ENCODE measurements at regions of chr12 and their contacts with region 1.

Region 1: DNA sequence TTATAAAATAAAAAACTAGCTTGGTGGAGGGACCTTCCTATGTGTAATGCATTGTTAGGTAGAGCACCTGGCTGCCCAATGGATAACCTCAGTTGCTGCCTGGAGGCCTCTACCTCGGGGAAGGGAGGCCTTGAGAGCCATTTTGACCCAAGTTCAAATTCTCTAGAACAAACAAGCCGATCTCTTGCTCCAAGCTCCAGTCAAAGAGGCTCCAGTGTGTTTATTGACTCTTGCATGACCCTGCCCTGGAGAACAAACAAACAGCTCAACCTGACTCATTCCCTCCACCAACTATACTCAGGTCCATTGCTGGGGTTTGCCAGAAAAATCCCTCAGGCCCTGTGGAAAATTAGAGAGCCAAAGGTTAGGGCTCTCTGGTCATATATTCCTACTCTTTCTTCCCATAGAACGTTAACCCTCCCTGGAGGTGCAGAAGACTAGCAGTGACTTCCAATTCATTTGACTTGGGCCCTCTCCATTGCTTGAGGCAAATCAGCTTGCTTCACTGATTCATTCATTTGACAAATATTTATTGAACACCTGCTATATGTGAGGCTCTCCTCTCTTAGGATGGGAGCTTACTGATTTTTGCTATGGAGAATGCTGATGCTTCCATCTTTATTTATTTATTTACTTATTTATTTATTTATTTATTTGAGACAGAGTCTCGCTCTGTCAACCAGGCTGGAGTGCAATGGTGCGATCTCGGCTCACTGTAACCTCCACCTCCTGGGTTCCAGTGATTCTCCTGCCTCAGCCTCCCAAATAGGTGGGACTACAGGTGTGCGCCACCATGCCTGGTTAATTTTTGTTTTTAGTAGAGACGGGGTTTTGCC is 73.7 kb upstream of the CISTR start:
- DNase-seq: peak; percentile 98
- ATAC-seq: peak; percentile 94
- H3K4me3 ChIP-seq: no peak overlapping the region
- H3K27ac ChIP-seq: peak overlapping the region; percentile 92
- H3K4me1 ChIP-seq: peaks cover 48% of the 10 kb centered on the region
- H3K27me3 ChIP-seq: no peaks in the 10 kb centered on the region
- CTCF ChIP-seq: no peak

Region 2: DNA sequence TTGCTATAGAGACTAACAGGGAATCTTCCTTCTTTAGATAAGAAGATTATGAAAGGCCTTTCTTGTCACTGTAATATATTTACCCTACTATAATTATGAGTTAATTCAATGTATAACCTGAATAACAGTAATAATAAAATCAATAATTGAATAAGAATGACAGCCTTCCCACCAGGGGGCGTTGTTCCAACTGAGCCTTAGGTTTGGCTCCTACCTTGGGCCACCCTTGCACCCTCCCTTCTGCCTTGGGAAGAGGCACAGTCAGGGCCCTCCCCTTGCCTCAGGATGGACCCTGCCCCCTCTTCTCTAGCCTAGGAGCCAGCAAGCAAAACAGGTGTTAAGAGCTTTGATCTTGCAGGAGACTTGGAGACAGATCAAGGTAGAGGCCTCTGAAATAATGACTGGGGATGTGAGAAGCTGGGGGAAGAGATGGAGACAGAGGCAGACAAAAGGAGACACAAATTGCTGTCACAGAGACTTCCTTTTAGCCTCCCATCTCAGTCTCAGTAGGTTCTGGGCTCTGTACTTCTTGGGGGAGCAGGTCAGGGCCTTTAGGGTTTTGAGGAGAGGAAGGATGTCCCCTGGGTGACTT is 33.6 kb before region 1 on chr12:
- CTCF ChIA-PET with region 1: no interaction called
- POLR2A ChIA-PET with region 1: no interaction called
- intact Hi-C with region 1: no loop called
- DNase-seq: peak; percentile 37
- ATAC-seq: no peak
- H3K4me3 ChIP-seq: no peak overlapping the region
- H3K27ac ChIP-seq: no peak overlapping the region
- H3K4me1 ChIP-seq: peaks cover 17% of the 10 kb centered on the region
- H3K27me3 ChIP-seq: no peaks in the 10 kb centered on the region
- CTCF ChIP-seq: peak; percentile 85

Region 3: GRCh38 chr12:53804429-53805126 is 20.9 kb before region 1 on chr12:
- CTCF ChIA-PET with region 1: interaction called, 6 read pairs
- POLR2A ChIA-PET with region 1: no interaction called
- intact Hi-C with region 1: loop called (anchors 1 kb)
- DNase-seq: peak; percentile 95
- ATAC-seq: peak; percentile 92
- H3K4me3 ChIP-seq: no peak overlapping the region
- H3K27ac ChIP-seq: peak overlapping the region; percentile 75
- H3K4me1 ChIP-seq: peaks cover 44% of the 10 kb centered on the region
- H3K27me3 ChIP-seq: no peaks in the 10 kb centered on the region
- CTCF ChIP-seq: peak; percentile 46

Region 4: GRCh38 chr12:53844989-53845844 is 19.8 kb after region 1 on chr12:
- CTCF ChIA-PET with region 1: no interaction called
- POLR2A ChIA-PET with region 1: no interaction called
- intact Hi-C with region 1: no loop called
- DNase-seq: peak; percentile 97
- ATAC-seq: peak; percentile 98
- H3K4me3 ChIP-seq: no peak overlapping the region
- H3K27ac ChIP-seq: peak overlapping the region; percentile 43
- H3K4me1 ChIP-seq: peaks cover 34% of the 10 kb centered on the region
- H3K27me3 ChIP-seq: no peaks in the 10 kb centered on the region
- CTCF ChIP-seq: no peak

Region 5: GRCh38 chr12:54279866-54280467 is 454.5 kb after region 1 on chr12 and contains the start of gene CBX5:
- CTCF ChIA-PET with region 1: no interaction called
- POLR2A ChIA-PET with region 1: no interaction called
- intact Hi-C with region 1: no loop called
- DNase-seq: peak; percentile 98
- ATAC-seq: peak; percentile 40
- H3K4me3 ChIP-seq: peak within 1 kb of the TSS; percentile 88
- H3K27ac ChIP-seq: peak within 1 kb of the TSS; percentile 87
- H3K4me1 ChIP-seq: peaks cover 31% of the 10 kb centered on the region
- H3K27me3 ChIP-seq: no peaks in the 10 kb centered on the region
- CTCF ChIP-seq: no peak
- total RNA-seq, gene CBX5: 14.6 and 14.9 TPM in 2 replicates

Measured in PC-3 (cell line).